ENCODE measurements at regions of chr15 and their contacts with region 1.

Region 1: GRCh38 chr15:29103824-29104565 is 165.6 kb downstream of the NSMCE3 start:
- DNase-seq: peak; percentile 61
- H3K4me3 Mint-ChIP-seq: no peak overlapping the region
- H3K27ac Mint-ChIP-seq: no peak overlapping the region
- H3K4me1 Mint-ChIP-seq: peaks cover 3% of the 10 kb centered on the region
- H3K27me3 Mint-ChIP-seq: no peaks in the 10 kb centered on the region

Region 2: GRCh38 chr15:28984421-28985315 is 119.3 kb before region 1 on chr15:
- CTCF ChIA-PET with region 1: no interaction called
- DNase-seq: no peak
- H3K4me3 Mint-ChIP-seq: no peak overlapping the region
- H3K27ac Mint-ChIP-seq: no peak overlapping the region
- H3K4me1 Mint-ChIP-seq: peaks cover 3% of the 10 kb centered on the region
- H3K27me3 Mint-ChIP-seq: no peaks in the 10 kb centered on the region

Region 3: GRCh38 chr15:29090617-29091466 is 13.2 kb before region 1 on chr15:
- CTCF ChIA-PET with region 1: interaction called, 44 read pairs
- DNase-seq: peak; percentile 63
- H3K4me3 Mint-ChIP-seq: no peak overlapping the region
- H3K27ac Mint-ChIP-seq: no peak overlapping the region
- H3K4me1 Mint-ChIP-seq: peaks cover 24% of the 10 kb centered on the region
- H3K27me3 Mint-ChIP-seq: no peaks in the 10 kb centered on the region

Measured in activated naive CD4-positive, alpha-beta T cell treated with anti-CD3 and anti-CD28 coated beads, Interleukin-2, amount 10 ng/mL, durations not matched to agents 7 days and 5 days (primary cell).